ENCODE measurements at regions of chr1 and their contacts with region 1.

Region 1: DNA sequence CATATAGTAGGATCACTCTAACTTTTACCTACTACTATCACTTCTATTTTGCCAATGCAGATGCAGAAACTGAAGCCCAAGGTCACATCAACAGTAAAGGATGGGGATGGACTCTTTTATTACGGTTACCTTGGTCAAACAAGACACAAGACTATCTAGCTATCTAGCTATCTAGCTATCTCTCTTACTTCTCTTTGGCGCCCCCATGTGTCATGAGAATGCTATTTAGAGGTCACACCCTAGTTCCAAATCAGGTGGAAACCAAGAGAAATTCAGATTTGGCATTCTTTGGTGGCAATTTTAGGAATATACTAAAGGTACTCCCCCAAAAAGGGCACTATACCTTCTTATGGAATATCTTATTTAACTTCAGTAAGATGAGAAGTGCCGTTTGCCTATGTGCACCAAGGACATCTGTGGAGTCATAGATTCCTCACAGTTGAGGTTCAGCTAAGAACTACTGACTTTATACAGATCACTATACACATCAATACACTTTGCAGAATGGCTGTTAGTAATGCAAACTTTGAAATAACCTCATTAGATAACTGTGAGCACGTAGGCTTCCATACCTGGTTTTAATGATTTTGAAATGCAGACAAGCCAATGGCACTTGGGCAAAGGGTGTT is 6.7 kb downstream of the ZNF648 start:
- DNase-seq: peak; percentile 30
- H3K4me3 Mint-ChIP-seq: no peak overlapping the region
- H3K27ac Mint-ChIP-seq: no peak overlapping the region
- H3K4me1 Mint-ChIP-seq: peaks cover 26% of the 10 kb centered on the region
- H3K27me3 Mint-ChIP-seq: peaks cover 24% of the 10 kb centered on the region

Region 2: GRCh38 chr1:181936768-181937581 is 117.8 kb before region 1 on chr1:
- intact Hi-C with region 1: loop called (anchors 5 kb)
- DNase-seq: peak; percentile 17
- H3K4me3 Mint-ChIP-seq: no peak overlapping the region
- H3K27ac Mint-ChIP-seq: no peak overlapping the region
- H3K4me1 Mint-ChIP-seq: peaks cover 2% of the 10 kb centered on the region
- H3K27me3 Mint-ChIP-seq: peaks cover 3% of the 10 kb centered on the region

Region 3: GRCh38 chr1:182069028-182069466 is 14.2 kb after region 1 on chr1:
- intact Hi-C with region 1: no loop called
- DNase-seq: no peak
- H3K4me3 Mint-ChIP-seq: no peak overlapping the region
- H3K27ac Mint-ChIP-seq: no peak overlapping the region
- H3K4me1 Mint-ChIP-seq: peaks cover 2% of the 10 kb centered on the region
- H3K27me3 Mint-ChIP-seq: peaks cover 14% of the 10 kb centered on the region

Measured in activated T-helper 2 cell treated with anti-CD3 and anti-CD28 coated beads, Interferon-gamma antibody, Interleukin-2, Interleukin-4, amounts not matched to agents 10 μg/mL and 5 μg/mL and 100 μg/mL, durations not matched to agents 14 hours and 24 hours and 36 hours (primary cell).